ENCODE measurements at regions of chr1 and their contacts with region 1.

Region 1: DNA sequence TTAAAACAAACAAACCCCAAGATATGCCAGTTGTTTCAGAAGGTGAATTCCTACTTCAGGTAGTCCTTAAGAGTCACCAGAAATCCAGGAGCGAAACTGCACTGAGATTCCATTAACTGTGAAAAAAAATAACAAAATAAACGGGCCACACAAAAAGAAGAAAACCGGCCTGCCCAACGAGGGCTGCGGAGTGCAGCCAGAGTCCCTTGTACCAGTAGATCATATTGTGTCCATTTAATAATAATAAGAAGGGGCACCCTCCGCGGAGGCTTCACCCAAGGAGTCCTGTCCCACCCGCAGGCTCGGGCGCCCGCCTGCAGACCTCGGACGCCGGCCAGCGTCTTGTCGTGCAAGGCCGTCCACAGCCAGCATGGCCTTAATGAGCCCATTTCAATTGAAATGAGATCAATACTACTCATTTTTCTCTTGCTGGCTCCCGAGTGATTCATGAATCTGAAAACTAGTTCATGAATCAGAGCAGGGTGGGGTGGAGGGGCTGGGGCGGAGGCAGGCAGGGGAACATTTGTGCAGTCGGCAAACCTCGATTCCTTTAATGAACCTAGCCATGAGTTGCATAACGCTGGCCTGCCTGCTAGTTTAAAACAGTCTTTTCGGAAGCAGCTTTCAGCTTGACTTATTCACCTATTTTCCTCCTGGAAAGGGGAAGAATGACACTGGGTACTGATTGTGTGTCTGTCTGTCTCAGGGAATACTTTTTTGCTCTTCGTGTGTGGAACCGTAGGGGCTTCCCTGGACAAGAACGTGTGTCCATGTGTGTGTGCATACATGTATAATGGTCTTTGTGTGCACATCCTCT is 113.1 kb upstream of the IRF2BP2 start:
- DNase-seq: peak in 1 of 5 donors; percentile 82
- H3K4me3 ChIP-seq: peak overlapping the region; percentile 0 to 41
- H3K4me3 Mint-ChIP-seq: peak overlapping the region; percentile 70 to 89 (median 82)
- H3K27ac ChIP-seq: peak overlapping the region; percentile 96
- H3K27ac Mint-ChIP-seq: peak overlapping the region; percentile 95 to 100 (median 98)
- H3K4me1 ChIP-seq: peaks cover 66% of the 10 kb centered on the region
- H3K4me1 Mint-ChIP-seq: peaks cover 45 to 85% (median 65%) of the 10 kb centered on the region in 4 donors
- H3K27me3 ChIP-seq: no peaks in the 10 kb centered on the region
- H3K27me3 Mint-ChIP-seq: peaks cover 0 to 3% of the 10 kb centered on the region in 2 donors

Region 2: DNA sequence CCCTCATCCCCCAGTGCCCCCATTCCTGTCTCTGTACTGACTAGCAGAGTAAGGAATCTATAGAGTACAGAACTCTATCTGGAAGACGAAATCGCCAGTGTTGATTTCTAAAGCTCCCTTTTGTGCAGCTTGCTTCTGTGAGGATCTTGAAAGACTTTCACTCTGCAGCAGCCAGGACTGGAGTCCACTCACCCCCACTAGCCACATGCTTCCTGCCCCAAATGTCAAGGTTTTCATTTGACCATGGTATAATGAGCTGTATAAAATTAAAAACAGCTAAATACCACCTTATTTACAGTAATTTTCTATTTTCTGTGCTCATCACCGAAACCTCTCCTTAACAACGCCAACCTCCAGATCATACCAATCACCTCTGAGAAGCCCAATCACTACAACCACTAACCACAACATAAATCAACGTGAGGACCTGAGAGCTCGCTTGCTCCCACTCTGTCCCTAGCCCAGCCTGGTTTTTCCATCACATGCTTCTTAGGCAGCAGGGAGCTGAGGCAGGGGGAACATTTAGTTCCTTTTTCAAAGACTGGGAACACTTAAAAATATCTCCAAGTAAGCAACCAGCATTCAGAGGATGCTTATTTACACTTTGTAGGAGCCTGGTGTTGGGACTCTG is 57.0 kb before region 1 on chr1:
- CTCF ChIA-PET with region 1: no interaction called
- POLR2A ChIA-PET with region 1: no interaction called
- intact Hi-C with region 1: no loop called
- DNase-seq: no peak
- H3K4me3 ChIP-seq: no peak overlapping the region
- H3K4me3 Mint-ChIP-seq: peak overlapping the region in 1 of 8 donors; percentile 18
- H3K27ac ChIP-seq: no peak overlapping the region
- H3K27ac Mint-ChIP-seq: no peak overlapping the region
- H3K4me1 ChIP-seq: no peaks in the 10 kb centered on the region
- H3K4me1 Mint-ChIP-seq: peaks cover 0 to 9% (median 3%) of the 10 kb centered on the region in 4 donors
- H3K27me3 ChIP-seq: no peaks in the 10 kb centered on the region
- H3K27me3 Mint-ChIP-seq: no peaks in the 10 kb centered on the region

Region 3: DNA sequence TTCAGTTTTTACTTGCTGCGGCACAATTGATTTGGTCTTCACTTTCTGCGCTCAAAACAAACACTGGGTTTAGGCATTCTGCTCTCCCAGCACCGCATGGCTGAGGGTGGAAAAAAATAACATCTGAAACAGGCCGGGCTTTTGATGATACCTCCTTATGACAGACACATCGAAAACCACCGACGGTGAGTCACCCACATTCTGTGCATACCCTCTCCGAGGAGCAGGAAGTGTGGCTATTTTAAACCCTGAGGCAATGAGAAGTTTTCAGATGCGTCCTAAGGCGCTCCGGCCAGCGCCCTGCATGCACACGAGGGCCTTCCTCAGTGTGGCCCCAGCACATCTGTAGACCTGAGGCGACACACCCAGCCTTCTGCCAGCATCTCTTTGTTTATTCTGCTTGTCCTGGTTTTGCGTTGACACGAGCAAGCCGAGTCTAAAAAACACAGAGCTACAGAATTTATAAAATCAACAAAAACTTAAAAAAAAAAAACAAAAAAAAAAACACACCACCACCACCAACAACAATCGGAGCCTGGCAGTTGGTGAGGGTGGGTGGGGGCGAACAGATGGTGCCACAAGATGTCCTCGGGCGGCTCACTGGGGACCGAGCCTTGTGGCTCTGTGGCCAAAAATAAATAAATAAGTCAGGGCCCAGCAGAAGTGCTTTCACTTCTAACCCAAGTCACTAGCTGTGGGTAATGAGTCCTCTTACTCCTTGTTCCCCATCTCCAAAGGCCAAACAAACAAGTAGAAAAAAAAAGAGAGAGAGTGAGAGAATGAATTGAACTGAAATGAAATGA is 49.4 kb after region 1 on chr1:
- CTCF ChIA-PET with region 1: interaction called, 6 read pairs
- POLR2A ChIA-PET with region 1: interaction called, 65 read pairs
- intact Hi-C with region 1: loop called (anchors 1 kb)
- DNase-seq: peak; percentile 81 to 96 (median 82)
- H3K4me3 ChIP-seq: no peak overlapping the region
- H3K4me3 Mint-ChIP-seq: peak overlapping the region; percentile 65 to 89 (median 84)
- H3K27ac ChIP-seq: peak overlapping the region; percentile 58
- H3K27ac Mint-ChIP-seq: peak overlapping the region; percentile 91 to 99 (median 98)
- H3K4me1 ChIP-seq: peaks cover 54% of the 10 kb centered on the region
- H3K4me1 Mint-ChIP-seq: peaks cover 42 to 56% (median 49%) of the 10 kb centered on the region in 4 donors
- H3K27me3 ChIP-seq: peaks cover 11% of the 10 kb centered on the region
- H3K27me3 Mint-ChIP-seq: no peaks in the 10 kb centered on the region

Region 4: DNA sequence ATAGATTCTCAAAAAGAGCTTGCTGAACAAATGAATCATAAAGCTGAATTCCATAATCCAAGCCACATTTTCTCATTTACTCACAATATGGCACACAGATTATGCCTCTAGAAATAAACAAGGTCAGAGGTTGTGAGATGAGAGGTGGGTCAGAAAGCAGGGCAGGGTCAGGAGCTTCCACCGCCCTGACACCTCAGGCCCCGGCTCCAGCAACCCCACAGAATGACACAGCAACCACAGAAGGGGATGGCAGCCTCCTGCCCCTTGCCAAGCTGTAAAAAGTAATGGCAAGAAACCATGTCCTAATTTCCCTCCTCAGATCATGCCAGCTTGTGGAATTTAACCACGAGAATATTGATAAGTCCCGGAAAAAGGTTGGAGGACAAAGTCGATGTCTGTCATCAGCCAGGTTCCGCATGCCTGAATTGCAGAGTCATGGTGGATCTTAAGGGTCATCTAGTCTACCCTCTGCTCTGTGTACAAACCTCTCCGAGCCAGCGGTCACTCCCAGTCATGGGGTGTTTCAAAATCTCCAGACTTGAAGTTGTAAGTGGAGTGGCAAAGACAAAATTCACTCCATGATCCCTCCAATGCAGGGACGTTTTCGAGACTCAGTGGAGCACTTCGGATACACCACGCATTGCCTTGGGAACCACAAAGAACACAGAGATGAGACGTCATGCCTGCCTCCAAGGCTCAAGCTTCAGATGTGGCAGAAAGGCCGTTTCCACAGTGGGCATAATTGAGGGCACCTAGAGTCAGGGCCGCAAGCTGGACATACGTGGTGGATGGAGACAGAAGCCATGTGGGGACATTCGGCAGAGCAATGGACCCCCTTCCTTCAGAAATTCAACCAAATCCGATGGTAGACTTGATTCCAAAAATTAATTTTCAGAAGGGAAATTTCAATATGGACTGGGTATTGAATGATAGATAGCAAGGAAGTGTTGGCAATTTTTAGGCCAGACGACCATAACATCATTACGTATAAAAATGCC is 151.5 kb after region 1 on chr1:
- CTCF ChIA-PET with region 1: no interaction called
- POLR2A ChIA-PET with region 1: no interaction called
- intact Hi-C with region 1: no loop called
- DNase-seq: no peak
- H3K4me3 ChIP-seq: no peak overlapping the region
- H3K4me3 Mint-ChIP-seq: no peak overlapping the region
- H3K27ac ChIP-seq: no peak overlapping the region
- H3K27ac Mint-ChIP-seq: peak overlapping the region in 1 of 7 donors; percentile 43
- H3K4me1 ChIP-seq: peaks cover 18% of the 10 kb centered on the region
- H3K4me1 Mint-ChIP-seq: peaks cover 0 to 8% (median 3%) of the 10 kb centered on the region in 4 donors
- H3K27me3 ChIP-seq: no peaks in the 10 kb centered on the region
- H3K27me3 Mint-ChIP-seq: no peaks in the 10 kb centered on the region

Region 5: GRCh38 chr1:234912548-234913277 is 189.6 kb after region 1 on chr1:
- CTCF ChIA-PET with region 1: no interaction called
- POLR2A ChIA-PET with region 1: interaction called, 12 read pairs
- intact Hi-C with region 1: no loop called
- DNase-seq: peak in 2 of 5 donors; percentile 11 to 16
- H3K4me3 ChIP-seq: no peak overlapping the region
- H3K4me3 Mint-ChIP-seq: peak overlapping the region in 4 of 8 donors; percentile 17 to 73 (median 52)
- H3K27ac ChIP-seq: no peak overlapping the region
- H3K27ac Mint-ChIP-seq: peak overlapping the region; percentile 68 to 95 (median 93)
- H3K4me1 ChIP-seq: peaks cover 29% of the 10 kb centered on the region
- H3K4me1 Mint-ChIP-seq: peaks cover 24 to 48% (median 33%) of the 10 kb centered on the region in 4 donors
- H3K27me3 ChIP-seq: no peaks in the 10 kb centered on the region
- H3K27me3 Mint-ChIP-seq: no peaks in the 10 kb centered on the region

Region 6: GRCh38 chr1:234963180-234963903 is 240.2 kb after region 1 on chr1:
- CTCF ChIA-PET with region 1: no interaction called
- POLR2A ChIA-PET with region 1: interaction called, 10 read pairs
- intact Hi-C with region 1: loop called (anchors 2 kb)
- DNase-seq: peak; percentile 85 to 94 (median 86)
- H3K4me3 ChIP-seq: peak overlapping the region; percentile 14 to 46
- H3K4me3 Mint-ChIP-seq: peak overlapping the region; percentile 41 to 89 (median 84)
- H3K27ac ChIP-seq: peak overlapping the region; percentile 89
- H3K27ac Mint-ChIP-seq: peak overlapping the region; percentile 90 to 98 (median 96)
- H3K4me1 ChIP-seq: peaks cover 72% of the 10 kb centered on the region
- H3K4me1 Mint-ChIP-seq: peaks cover 58 to 76% (median 64%) of the 10 kb centered on the region in 4 donors
- H3K27me3 ChIP-seq: no peaks in the 10 kb centered on the region
- H3K27me3 Mint-ChIP-seq: no peaks in the 10 kb centered on the region

Region 7: DNA sequence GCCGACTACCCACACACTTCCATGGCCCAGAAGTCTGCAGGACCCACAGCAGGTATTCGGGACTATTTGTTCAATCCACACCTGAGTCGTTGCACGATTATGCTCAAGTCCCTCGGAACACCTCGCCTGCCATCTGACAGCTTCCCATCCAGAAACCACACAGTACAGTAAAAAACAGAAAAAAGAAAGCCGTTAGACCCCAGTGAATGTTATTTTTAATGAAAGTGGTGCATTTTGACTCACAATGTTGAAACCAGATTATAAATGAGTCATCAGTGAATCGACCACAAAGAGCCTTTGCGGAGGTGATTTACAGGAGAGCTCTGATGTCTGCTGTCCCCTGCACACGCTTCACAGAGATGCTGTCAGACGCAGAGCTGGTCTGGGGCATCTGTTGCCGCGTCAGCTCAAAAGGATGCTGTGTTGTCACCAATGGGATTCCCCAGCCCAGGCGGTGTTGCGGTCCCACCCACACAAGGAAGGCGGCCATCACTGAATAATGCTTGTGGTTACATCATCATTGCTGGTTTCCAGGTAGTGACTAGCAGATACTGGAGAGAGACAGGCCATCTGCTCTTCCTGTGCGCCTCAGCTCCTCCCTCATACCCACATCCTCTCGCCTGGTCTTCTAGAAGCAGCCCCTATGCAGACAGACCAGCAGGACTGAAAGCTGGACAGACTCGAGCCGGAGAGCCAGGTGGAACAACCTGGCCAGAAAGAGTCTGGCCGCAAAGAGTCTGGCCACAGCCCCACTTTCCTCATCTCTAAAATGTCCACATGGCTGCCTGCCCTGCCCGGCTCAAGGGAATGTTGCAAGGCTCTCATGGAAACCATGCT is 288.7 kb after region 1 on chr1:
- CTCF ChIA-PET with region 1: no interaction called
- POLR2A ChIA-PET with region 1: interaction called, 15 read pairs
- intact Hi-C with region 1: loop called (anchors 1 kb)
- DNase-seq: peak; percentile 93 to 99 (median 97)
- H3K4me3 ChIP-seq: peak overlapping the region in 1 of 2 donors; percentile 61
- H3K4me3 Mint-ChIP-seq: peak overlapping the region; percentile 75 to 90 (median 82)
- H3K27ac ChIP-seq: peak overlapping the region; percentile 91
- H3K27ac Mint-ChIP-seq: peak overlapping the region; percentile 93 to 99 (median 99)
- H3K4me1 ChIP-seq: peaks cover 45% of the 10 kb centered on the region
- H3K4me1 Mint-ChIP-seq: peaks cover 43 to 73% (median 58%) of the 10 kb centered on the region in 4 donors
- H3K27me3 ChIP-seq: no peaks in the 10 kb centered on the region
- H3K27me3 Mint-ChIP-seq: no peaks in the 10 kb centered on the region

Measured in CD4-positive, alpha-beta memory T cell (primary cell).